Prostate gland (tissue), 2 donors: ENCODE measurements at regions of chr10 and their contacts with region 1.

Region 1: GRCh38 chr10:132588301-132589013 is 50.9 kb downstream of the INPP5A start:
- DNase-seq: no peak
- H3K4me3 ChIP-seq: no peak overlapping the region
- H3K27ac ChIP-seq: peak overlapping the region; percentile 46 to 84
- H3K4me1 ChIP-seq: peaks cover 21% of the 10 kb centered on the region
- H3K27me3 ChIP-seq: no peaks in the 10 kb centered on the region
- CTCF ChIP-seq: no peak
- POLR2A ChIP-seq: no peak

Region 2: DNA sequence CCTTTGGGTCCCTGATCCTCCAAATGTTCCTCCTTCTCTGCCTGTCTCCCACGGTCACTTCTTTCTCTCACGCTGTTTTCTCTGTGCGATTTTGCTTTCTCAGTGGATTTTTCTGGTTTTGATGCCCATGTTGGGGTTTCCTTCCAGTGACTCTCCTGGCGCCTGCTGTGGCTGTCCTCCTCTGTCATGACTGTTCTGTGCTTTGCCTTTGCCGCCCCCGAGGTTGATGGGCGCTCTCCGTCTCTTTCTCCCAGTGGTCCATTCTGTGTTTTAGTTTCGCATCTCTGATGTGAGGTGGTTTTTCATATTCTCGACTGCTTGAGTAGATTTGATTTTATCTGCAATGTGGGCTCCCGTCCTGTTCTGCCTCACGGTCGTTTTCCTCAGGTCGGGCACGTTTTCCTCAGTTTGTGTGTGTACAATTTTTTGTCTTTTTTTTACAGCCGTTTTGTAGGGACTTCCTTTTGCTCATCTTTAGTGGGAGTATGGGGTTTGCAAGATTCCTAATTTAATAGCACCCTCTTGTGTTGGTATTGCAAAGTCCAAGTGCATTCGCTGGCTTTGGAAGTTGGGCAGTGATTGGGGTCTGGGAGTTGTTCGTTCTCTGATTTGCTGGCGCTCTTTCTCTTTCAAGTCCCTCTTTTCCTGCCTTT is 49.1 kb after region 1 on chr10:
- intact Hi-C with region 1: loop called (anchors 5 kb)
- DNase-seq: peak; percentile 39
- H3K4me3 ChIP-seq: no peak overlapping the region
- H3K27ac ChIP-seq: no peak overlapping the region
- H3K4me1 ChIP-seq: peaks cover 10% of the 10 kb centered on the region
- H3K27me3 ChIP-seq: no peaks in the 10 kb centered on the region
- CTCF ChIP-seq: peak; percentile 39 to 87 (median 78)
- POLR2A ChIP-seq: no peak